ENCODE measurements at regions of chr1 and their contacts with region 1.

Region 1: DNA sequence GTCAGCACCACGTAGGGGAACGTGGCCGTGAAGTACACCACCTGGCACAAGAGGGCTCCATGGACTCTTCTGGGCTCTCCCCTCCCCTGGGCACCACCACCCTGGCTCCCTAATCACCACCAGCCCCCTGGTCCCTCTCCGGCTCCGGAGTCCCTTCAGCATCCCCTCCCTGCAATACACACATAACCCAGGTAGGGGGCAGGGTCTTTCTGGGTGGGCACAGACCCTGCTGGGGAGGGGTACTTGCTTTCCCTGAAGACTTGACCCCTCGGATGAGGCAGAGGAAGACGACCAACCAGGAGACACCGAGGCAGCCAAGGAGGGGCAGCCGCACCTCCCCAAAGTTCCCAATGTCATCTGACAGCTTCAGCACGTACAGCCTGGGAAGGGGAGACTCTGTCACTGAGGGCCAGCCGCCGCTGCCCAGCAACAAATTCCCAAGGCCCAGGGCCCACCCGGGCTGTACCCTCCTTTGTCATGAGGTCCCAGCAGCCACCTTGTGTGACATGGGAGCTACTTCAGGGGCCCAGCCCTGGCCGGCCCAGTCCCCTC is 11.3 kb downstream of the CCDC24 start:
- DNase-seq: no peak
- CTCF ChIP-seq: no peak

Region 2: GRCh38 chr1:44036409-44037139 is 33.9 kb after region 1 on chr1:
- in situ Hi-C with region 1: loop called (anchors 5 kb)
- DNase-seq: peak; percentile 76
- CTCF ChIP-seq: peak; percentile 93

Measured in GM13976 (cell line).